Activated CD4-positive, alpha-beta memory T cell treated with anti-CD3 and anti-CD28 coated beads for 36 hours (primary cell): ENCODE measurements at regions of chr19 and their contacts with region 1.

Region 1: GRCh38 chr19:4638828-4639530 is at the start of gene TNFAIP8L1:
- DNase-seq: peak; percentile 99
- H3K4me3 Mint-ChIP-seq: peak within 1 kb of the TSS; percentile 94
- H3K27ac Mint-ChIP-seq: peak within 1 kb of the TSS; percentile 96
- H3K4me1 Mint-ChIP-seq: peaks cover 25% of the 10 kb centered on the region
- H3K27me3 Mint-ChIP-seq: no peaks in the 10 kb centered on the region
- total RNA-seq, gene TNFAIP8L1: 17.2 to 17.4 TPM

Region 2: DNA sequence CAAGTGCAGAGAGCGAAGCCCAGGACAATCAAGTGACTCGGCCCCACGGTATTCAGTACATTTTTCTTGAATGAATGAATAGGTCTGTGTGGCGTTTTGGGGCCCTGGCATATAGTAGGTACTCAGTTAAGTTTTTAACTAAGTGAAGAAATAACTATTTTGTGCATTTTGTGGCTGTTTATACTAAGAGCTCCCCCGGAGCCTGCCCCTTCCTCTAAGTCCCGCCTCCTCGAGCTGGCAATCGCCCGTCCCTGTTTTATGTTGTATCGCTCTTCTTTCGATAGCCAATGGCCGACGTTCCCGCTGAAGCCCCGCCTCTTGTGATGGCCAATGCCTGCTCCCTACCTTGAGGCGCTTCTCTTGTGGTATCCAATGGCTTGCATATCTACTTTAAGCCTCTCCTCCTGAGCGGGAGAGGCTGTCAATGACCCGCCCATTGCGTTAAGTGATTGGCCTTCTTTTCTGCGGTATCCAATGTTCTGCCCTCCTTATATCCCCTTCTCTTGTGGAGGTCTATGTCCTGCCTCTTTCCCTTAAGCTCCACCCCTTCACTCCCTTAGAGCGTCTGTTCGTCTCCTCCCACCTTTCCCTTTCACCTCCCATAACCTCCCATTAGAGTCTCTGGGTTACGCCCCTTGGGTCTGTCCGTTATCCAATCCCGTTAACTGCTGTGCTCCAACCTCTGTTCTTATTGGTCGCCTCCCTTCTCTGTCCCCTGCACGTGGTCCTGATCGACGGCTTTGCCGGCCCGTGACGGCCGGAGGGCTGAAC is 167.4 kb before region 1 on chr19:
- CTCF ChIA-PET with region 1: no interaction called
- POLR2A ChIA-PET with region 1: no interaction called
- intact Hi-C with region 1: loop called (anchors 5 kb)
- DNase-seq: peak; percentile 99
- H3K4me3 Mint-ChIP-seq: no peak overlapping the region
- H3K27ac Mint-ChIP-seq: no peak overlapping the region
- H3K4me1 Mint-ChIP-seq: peaks cover 21% of the 10 kb centered on the region
- H3K27me3 Mint-ChIP-seq: no peaks in the 10 kb centered on the region

Region 3: DNA sequence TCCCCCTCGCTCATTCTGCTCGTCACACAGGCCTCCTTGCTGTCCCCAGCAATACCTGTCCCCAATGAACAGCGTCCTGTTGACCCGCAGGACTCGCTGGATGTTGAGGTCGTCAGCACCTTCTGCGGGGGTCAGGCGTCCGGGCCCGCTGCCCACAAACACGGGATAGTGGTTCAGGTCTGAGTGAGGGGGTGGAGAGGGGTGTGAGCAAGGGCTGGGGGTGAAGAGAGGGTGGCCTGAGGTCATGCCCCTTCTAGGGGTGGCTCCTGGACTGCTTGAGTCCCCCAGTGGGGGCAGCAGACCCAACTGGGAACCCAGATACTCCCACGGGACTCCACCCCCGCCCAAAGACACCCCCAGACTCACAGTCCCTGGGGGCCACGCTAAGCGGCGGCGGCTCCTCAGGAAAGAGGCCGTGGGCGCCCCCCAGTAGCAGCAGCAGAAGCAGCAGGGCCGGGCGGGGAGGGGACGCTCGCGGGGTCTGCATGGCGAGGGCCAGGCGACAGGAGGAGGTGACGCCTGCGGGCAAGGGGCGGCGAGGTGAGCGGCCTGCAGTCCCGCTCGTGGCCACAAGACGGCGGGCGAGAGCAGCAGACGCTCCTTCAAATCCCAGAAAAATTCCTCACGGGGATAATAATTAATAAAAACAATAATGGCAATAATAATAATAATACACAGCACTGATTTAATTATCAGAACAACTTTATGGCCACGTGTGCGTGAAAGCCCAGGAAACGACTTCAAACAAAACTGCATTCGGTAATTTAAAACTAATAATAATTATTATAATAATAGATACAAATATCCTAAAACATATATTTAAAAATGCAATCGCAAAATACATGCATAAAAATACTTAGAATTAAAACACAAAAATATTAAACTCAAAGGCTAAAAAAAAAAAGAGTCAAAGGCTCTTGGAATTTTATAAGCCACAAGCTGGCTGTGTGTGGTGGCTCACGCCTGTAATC is 80.7 kb before region 1 on chr19:
- CTCF ChIA-PET with region 1: interaction called, 11 read pairs
- POLR2A ChIA-PET with region 1: no interaction called
- intact Hi-C with region 1: no loop called
- DNase-seq: peak; percentile 50
- H3K4me3 Mint-ChIP-seq: no peak overlapping the region
- H3K27ac Mint-ChIP-seq: no peak overlapping the region
- H3K4me1 Mint-ChIP-seq: no peaks in the 10 kb centered on the region
- H3K27me3 Mint-ChIP-seq: no peaks in the 10 kb centered on the region

Region 4: DNA sequence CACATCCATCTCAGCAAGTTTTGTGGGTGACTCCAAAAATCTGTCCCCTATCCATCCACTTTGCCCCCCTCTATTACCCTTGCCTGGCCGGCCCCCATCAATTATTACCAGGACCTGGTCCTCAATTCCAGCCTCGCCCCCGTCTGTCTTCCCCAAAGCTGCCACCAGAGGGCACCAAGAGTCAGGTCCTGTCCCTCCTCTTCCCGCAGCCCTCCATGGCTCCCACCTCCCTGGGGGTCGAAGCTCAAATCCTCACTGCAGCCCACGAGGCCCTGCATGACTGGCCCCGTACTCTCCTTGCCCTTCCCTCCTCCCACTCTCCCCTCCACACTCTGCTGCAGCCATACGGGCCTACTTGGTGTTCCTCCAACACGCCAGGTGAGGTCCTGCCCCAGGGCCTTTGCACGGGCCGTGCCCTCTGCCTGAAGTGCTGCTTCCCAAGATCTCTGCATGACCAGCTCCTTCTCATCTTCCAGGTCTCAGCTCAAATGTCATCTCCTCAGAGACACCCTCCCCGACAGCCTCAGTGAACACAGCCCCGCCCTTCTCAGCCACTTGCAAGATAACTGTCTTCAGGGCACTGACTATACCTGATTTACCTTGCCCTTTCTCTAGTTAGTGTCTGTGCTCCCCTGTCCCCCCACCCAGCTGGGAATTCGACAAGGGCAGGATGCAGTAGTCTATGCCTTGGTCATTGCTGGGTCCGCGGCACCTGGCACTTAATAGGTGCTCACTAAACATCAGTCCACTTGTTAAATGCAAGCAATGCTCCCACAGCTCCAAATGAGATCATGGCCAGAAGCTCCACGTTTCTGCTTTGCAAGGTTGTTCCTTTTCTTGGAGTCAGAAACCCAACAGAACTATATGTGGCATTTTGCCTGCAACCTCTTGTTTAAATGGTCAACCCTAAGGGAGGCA is 62.7 kb before region 1 on chr19:
- CTCF ChIA-PET with region 1: interaction called, 66 read pairs
- POLR2A ChIA-PET with region 1: no interaction called
- intact Hi-C with region 1: loop called (anchors 2 kb)
- DNase-seq: peak; percentile 79
- H3K4me3 Mint-ChIP-seq: no peak overlapping the region
- H3K27ac Mint-ChIP-seq: no peak overlapping the region
- H3K4me1 Mint-ChIP-seq: no peaks in the 10 kb centered on the region
- H3K27me3 Mint-ChIP-seq: peaks cover 39% of the 10 kb centered on the region

Region 5: GRCh38 chr19:4669723-4670480 is 30.9 kb after region 1 on chr19 and contains the start of gene MYDGF:
- CTCF ChIA-PET with region 1: interaction called, 3 read pairs
- POLR2A ChIA-PET with region 1: no interaction called
- intact Hi-C with region 1: loop called (anchors 2 kb)
- DNase-seq: peak; percentile 95
- H3K4me3 Mint-ChIP-seq: peak within 1 kb of the TSS; percentile 87
- H3K27ac Mint-ChIP-seq: peak within 1 kb of the TSS; percentile 75
- H3K4me1 Mint-ChIP-seq: peaks cover 18% of the 10 kb centered on the region
- H3K27me3 Mint-ChIP-seq: no peaks in the 10 kb centered on the region
- total RNA-seq, gene MYDGF: 72.9 to 74.7 TPM